Lower leg skin (tissue), 4 donors: ENCODE measurements at regions of chr14 and their contacts with region 1.

Region 1: GRCh38 chr14:105527661-105528581 is 1.5 kb downstream of the TMEM121 start:
- DNase-seq: peak; percentile 50 to 96
- H3K4me3 ChIP-seq: peak overlapping the region; percentile 38
- CTCF ChIP-seq: peak in 1 of 3 donors; percentile 38
- POLR2A ChIP-seq: no peak

Region 2: GRCh38 chr14:105366386-105367074 is 161.4 kb before region 1 on chr14:
- intact Hi-C with region 1: loop called (anchors 5 kb)
- DNase-seq: no peak
- H3K4me3 ChIP-seq: no peak overlapping the region
- CTCF ChIP-seq: no peak
- POLR2A ChIP-seq: no peak